ENCODE measurements at regions of chr13 and their contacts with region 1.

Region 1: DNA sequence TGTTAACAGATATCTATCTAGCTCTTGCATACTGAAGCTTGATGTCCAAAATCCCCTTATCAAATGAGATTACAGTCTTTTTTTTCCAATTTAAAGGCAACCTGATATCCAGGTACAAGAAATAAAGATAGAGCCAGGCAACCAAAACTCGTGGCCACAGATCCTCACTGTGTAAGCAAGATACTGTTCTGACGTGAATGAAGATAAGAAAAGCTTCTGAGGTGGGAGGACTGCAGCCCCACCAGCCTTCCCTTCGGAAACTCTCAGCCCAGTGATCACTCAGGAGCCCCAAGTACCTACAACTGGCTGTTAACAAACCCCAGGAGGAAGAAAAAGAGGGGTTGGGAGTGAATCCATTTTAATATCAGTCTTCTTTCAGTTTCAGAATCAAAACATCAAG is 191.6 kb downstream of the EFNB2 start:
- DNase-seq: no peak
- ATAC-seq: no peak
- H3K4me3 ChIP-seq: no peak overlapping the region
- H3K27ac ChIP-seq: no peak overlapping the region
- H3K4me1 ChIP-seq: peaks cover 0 to 3% (median 0%) of the 10 kb centered on the region in 9 donors
- H3K27me3 ChIP-seq: peaks cover 0 to 41% (median 32%) of the 10 kb centered on the region in 7 donors
- CTCF ChIP-seq: no peak

Region 2: GRCh38 chr13:104900186-104900817 is 1443.5 kb before region 1 on chr13:
- intact Hi-C with region 1: loop called in 1 of 10 experiments (anchors 5 kb)
- DNase-seq: no peak
- ATAC-seq: no peak
- H3K4me3 ChIP-seq: no peak overlapping the region
- H3K27ac ChIP-seq: no peak overlapping the region
- H3K4me1 ChIP-seq: no peaks in the 10 kb centered on the region
- H3K27me3 ChIP-seq: no peaks in the 10 kb centered on the region
- CTCF ChIP-seq: peak in 1 of 9 donors; percentile 31

Measured in heart right ventricle (tissue), 16 donors.